MCF 10A (cell line): ENCODE measurements at regions of chr6 and their contacts with region 1.

Region 1: DNA sequence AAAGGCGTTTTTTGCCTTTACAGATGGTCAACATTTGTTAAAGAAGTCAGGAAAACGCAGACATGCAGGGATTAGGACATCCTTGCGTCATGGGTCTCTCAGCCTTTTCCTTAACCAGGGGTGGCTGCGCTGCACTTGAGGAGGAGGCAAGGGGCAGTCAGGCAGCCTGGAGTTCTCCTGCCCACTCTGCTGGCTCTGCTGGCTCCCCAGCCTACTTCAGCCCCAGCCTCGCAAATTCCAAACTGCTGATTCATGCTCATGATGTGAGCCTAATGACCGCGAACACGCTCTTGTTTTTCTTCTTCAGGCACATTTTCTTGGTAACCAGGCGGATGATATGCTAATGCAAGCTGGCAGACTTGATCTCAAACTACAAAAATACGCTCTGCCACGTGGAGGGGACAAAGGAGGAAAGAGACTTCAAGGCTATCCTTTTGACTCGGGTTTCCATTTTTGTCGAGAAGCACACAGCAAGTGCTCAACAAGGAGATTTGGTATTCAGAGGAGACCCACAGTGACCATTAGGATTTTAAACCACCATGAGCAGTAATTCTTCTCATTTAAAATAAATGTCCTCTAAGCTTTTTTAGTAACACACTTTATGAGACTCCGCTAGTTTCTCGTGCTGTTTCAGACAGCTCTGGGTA is 290.3 kb upstream of the STXBP5 start:
- DNase-seq: peak; percentile 97
- H3K4me3 Mint-ChIP-seq: peak overlapping the region; percentile 68
- H3K27ac Mint-ChIP-seq: peak overlapping the region; percentile 96
- H3K4me1 Mint-ChIP-seq: peaks cover 40% of the 10 kb centered on the region
- H3K27me3 Mint-ChIP-seq: no peaks in the 10 kb centered on the region
- CTCF ChIP-seq: no peak

Region 2: GRCh38 chr6:146968041-146968760 is 54.2 kb after region 1 on chr6:
- CTCF ChIA-PET with region 1: no interaction called
- POLR2A ChIA-PET with region 1: interaction called, 5 read pairs
- intact Hi-C with region 1: loop called (anchors 2 kb)
- DNase-seq: peak; percentile 91
- H3K4me3 Mint-ChIP-seq: no peak overlapping the region
- H3K27ac Mint-ChIP-seq: peak overlapping the region; percentile 54
- H3K4me1 Mint-ChIP-seq: peaks cover 13% of the 10 kb centered on the region
- H3K27me3 Mint-ChIP-seq: no peaks in the 10 kb centered on the region
- CTCF ChIP-seq: no peak

Region 3: DNA sequence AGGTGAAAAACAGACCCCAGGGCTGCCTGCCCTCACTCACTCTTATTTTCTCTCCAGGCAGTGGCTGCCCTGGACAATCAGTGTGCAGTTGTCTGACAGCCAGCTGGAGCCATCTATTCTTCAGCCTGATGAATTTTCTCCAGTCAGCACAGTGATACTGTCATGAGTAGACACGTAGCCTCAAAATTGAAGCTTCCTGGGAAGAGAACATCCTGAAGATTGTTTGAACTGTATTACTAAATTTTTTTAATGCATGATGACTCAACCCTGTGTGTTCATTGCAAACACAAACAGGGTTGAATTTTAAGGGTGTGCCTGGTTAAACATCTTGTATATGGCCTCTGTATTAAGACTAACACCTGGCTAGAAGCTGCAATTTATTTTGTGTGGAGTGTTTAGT is 240.5 kb after region 1 on chr6:
- CTCF ChIA-PET with region 1: no interaction called
- POLR2A ChIA-PET with region 1: interaction called, 3 read pairs
- intact Hi-C with region 1: loop called (anchors 1 kb)
- DNase-seq: peak; percentile 81
- H3K4me3 Mint-ChIP-seq: peak overlapping the region; percentile 43
- H3K27ac Mint-ChIP-seq: peak overlapping the region; percentile 90
- H3K4me1 Mint-ChIP-seq: peaks cover 52% of the 10 kb centered on the region
- H3K27me3 Mint-ChIP-seq: no peaks in the 10 kb centered on the region
- CTCF ChIP-seq: no peak